Heart right ventricle (tissue), 16 donors: ENCODE measurements at regions of chr14 and their contacts with region 1.

Region 1: GRCh38 chr14:103057365-103058096 is at the start of gene CDC42BPB:
- DNase-seq: peak; percentile 89 to 91
- ATAC-seq: peak; percentile 89 to 96 (median 94)
- H3K4me3 ChIP-seq: peak within 1 kb of the TSS; percentile 85 to 100 (median 98)
- H3K27ac ChIP-seq: peak within 1 kb of the TSS; percentile 95 to 100 (median 97)
- H3K4me1 ChIP-seq: peaks cover 12 to 55% (median 45%) of the 10 kb centered on the region in 9 donors
- H3K27me3 ChIP-seq: peaks cover 0 to 30% (median 0%) of the 10 kb centered on the region in 7 donors
- CTCF ChIP-seq: no peak
- total RNA-seq, gene CDC42BPB: 60.8 to 83.6 (median 70.1) TPM

Region 2: GRCh38 chr14:102591889-102592763 is 465.4 kb before region 1 on chr14 and contains the start of gene RCOR1:
- intact Hi-C with region 1: loop called in 1 of 10 experiments (anchors 10 kb)
- DNase-seq: peak; percentile 98
- ATAC-seq: peak; percentile 94 to 97 (median 96)
- H3K4me3 ChIP-seq: peak within 1 kb of the TSS; percentile 69 to 98 (median 93)
- H3K27ac ChIP-seq: peak within 1 kb of the TSS; percentile 87 to 100 (median 98)
- H3K4me1 ChIP-seq: peaks cover 0 to 36% (median 29%) of the 10 kb centered on the region in 9 donors
- H3K27me3 ChIP-seq: no peaks in the 10 kb centered on the region
- CTCF ChIP-seq: no peak
- total RNA-seq, gene RCOR1: 11.1 to 16.9 (median 13.2) TPM

Region 3: DNA sequence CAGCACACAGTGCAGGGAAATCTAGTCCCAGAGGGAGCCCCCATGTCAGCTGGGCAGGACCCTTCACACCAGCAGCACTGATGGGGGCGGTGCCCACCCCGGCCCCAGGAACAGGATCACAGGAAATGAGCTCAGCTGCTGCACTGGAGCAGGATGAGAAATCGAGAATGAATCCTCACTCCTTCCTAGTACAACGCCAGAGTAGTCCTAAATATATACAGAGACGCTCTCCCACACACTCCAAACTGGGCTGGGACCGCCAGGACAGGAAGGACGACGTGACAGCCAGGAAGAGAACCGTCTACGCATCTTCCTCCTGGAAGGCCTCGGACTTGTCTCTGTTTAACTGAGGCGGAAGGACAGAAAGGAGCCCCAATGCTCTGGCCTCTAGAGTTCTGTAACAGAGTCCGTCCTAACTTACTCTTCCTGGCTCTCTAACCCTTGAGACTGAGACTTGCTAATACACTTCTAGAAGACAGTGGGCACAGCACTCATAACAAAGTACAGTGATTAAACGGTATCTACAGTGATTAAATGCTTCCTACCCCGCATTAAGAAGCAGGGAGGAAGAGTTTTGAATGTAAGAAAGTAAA is 33.6 kb before region 1 on chr14:
- intact Hi-C with region 1: loop called in 1 of 10 experiments (anchors 5 kb)
- DNase-seq: peak in 1 of 2 donors; percentile 52
- ATAC-seq: peak; percentile 72 to 87 (median 80)
- H3K4me3 ChIP-seq: peak overlapping the region in 6 of 10 donors; percentile 3 to 24 (median 12)
- H3K27ac ChIP-seq: peak overlapping the region in 9 of 10 donors; percentile 17 to 85 (median 73)
- H3K4me1 ChIP-seq: peaks cover 0 to 75% (median 54%) of the 10 kb centered on the region in 9 donors
- H3K27me3 ChIP-seq: no peaks in the 10 kb centered on the region
- CTCF ChIP-seq: no peak